Thyroid gland (tissue), 4 donors: ENCODE measurements at regions of chr5 and their contacts with region 1.

Region 1: GRCh38 chr5:168270000-168270399 is 21.4 kb upstream of the WWC1 start:
- DNase-seq: peak; percentile 38 to 49
- H3K4me3 ChIP-seq: no peak overlapping the region
- H3K27ac ChIP-seq: peak overlapping the region in 2 of 3 donors; percentile 18 to 75
- H3K4me1 ChIP-seq: peaks cover 6 to 20% of the 10 kb centered on the region in 2 donors
- H3K27me3 ChIP-seq: no peaks in the 10 kb centered on the region
- CTCF ChIP-seq: no peak
- POLR2A ChIP-seq: no peak

Region 2: GRCh38 chr5:168454489-168454888 is 184.5 kb after region 1 on chr5:
- intact Hi-C with region 1: loop called (anchors 10 kb)
- DNase-seq: no peak
- H3K4me3 ChIP-seq: no peak overlapping the region
- H3K27ac ChIP-seq: no peak overlapping the region
- H3K4me1 ChIP-seq: no peaks in the 10 kb centered on the region
- H3K27me3 ChIP-seq: no peaks in the 10 kb centered on the region
- CTCF ChIP-seq: no peak
- POLR2A ChIP-seq: no peak

Region 3: DNA sequence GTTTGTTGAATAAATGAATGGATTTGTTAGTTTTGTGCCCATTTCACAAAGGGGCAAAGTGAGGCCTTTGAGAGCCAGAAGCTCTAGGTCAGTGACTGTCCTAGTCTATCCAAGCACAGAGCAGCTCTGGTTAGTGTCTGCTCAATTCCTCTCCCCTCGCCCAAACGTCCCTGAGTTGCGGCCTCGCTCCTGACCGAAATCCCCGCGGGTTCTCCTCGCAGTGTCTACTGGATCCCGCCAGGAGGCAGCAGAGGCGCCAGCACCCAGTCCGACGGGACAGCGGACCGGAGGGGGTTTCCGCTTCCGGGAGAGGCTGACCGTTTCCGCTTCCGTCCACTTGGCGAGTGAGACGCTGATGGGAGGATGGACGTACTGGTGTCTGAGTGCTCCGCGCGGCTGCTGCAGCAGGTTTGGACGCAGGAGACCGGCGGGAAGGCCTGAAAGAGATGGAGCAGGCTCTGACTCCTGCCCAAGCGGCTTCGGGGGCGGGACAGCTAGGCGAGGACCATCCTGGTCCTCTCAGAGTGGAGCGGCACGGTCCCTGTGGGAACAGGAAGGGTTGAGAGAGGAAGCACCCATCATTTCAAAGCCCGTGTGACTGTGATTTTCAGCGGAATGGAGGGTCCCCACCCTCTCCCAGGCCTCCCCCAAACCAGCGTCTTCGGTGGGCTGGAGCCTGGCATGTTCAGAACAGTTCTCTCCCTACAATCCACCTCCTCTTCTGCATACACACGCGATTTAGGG is 216.3 kb after region 1 on chr5 and contains the start of gene RARS1:
- intact Hi-C with region 1: loop called (anchors 10 kb)
- DNase-seq: peak; percentile 93 to 96
- H3K4me3 ChIP-seq: peak within 1 kb of the TSS; percentile 60 to 94 (median 78)
- H3K27ac ChIP-seq: peak within 1 kb of the TSS in 2 of 3 donors; percentile 51 to 69
- H3K4me1 ChIP-seq: peaks cover 6 to 13% of the 10 kb centered on the region in 2 donors
- H3K27me3 ChIP-seq: no peaks in the 10 kb centered on the region
- CTCF ChIP-seq: peak; percentile 63 to 99 (median 96)
- POLR2A ChIP-seq: peak in 1 of 2 donors; percentile 84
- total RNA-seq, gene RARS1: 72.2 to 87.9 (median 74.2) TPM